ENCODE measurements at regions of chr3 and their contacts with region 1.

Region 1: DNA sequence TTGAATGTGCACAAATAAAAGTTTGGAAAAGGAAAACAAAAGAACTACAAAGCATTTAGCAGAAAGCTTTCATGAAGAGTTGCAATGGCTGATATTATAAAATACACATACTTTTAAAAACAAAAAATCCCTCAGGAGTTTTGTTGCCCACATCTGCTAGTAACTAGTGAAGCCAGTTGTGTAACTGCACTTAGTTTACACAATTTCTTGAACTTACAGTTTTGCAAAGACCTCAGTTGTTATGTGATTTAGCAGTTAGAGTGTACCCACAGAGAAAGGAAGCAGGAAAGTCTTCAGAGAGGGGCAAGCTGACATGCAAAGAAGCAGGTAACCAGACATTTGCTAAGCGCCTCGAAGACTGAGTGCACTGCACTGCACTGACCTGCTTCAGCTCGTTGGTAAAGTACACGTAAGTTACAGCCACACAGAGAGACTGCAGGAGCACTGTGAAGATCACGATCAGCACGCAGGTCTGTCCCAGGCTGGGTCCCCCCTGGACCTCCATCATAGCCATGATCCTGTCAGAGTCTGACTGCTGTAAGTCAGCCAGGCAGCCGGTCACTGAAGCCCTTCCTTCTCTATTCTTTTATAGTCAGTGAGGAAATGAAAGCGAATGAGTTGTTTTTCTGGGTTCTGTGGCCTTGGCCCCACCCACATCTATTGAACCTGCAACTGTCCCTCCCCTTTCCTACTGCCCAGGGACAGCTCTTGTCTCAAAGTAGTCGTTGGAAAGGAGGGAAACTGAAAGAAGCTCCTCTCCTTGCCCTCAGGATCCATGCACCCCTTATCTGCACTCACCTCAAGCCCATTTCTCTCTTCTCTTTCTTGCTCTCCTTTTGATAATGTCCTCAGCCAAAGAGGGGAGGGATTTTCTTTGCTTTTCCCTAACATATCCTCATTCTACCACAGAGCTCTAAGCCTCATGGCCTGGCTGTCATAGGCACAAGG is at the start of gene TNFSF10:
- DNase-seq: peak; percentile 48 to 62
- H3K4me3 ChIP-seq: peak within 1 kb of the TSS; percentile 24; the same call in 1 of the 2 replicates
- H3K27ac ChIP-seq: no peak within 1 kb of the TSS
- H3K4me1 ChIP-seq: peaks cover 7% of the 10 kb centered on the region
- H3K27me3 ChIP-seq: no peaks in the 10 kb centered on the region
- CTCF ChIP-seq: no peak
- total RNA-seq, gene TNFSF10: 18.3 and 21.4 TPM in 2 replicates

Region 2: GRCh38 chr3:172550347-172550943 is 27.3 kb after region 1 on chr3:
- CTCF ChIA-PET with region 1: no interaction called
- POLR2A ChIA-PET with region 1: interaction called, 15 read pairs
- intact Hi-C with region 1: no loop called
- DNase-seq: peak; percentile 79 to 88
- H3K4me3 ChIP-seq: no peak overlapping the region
- H3K27ac ChIP-seq: no peak overlapping the region
- H3K4me1 ChIP-seq: peaks cover 50% of the 10 kb centered on the region
- H3K27me3 ChIP-seq: no peaks in the 10 kb centered on the region
- CTCF ChIP-seq: no peak

Region 3: DNA sequence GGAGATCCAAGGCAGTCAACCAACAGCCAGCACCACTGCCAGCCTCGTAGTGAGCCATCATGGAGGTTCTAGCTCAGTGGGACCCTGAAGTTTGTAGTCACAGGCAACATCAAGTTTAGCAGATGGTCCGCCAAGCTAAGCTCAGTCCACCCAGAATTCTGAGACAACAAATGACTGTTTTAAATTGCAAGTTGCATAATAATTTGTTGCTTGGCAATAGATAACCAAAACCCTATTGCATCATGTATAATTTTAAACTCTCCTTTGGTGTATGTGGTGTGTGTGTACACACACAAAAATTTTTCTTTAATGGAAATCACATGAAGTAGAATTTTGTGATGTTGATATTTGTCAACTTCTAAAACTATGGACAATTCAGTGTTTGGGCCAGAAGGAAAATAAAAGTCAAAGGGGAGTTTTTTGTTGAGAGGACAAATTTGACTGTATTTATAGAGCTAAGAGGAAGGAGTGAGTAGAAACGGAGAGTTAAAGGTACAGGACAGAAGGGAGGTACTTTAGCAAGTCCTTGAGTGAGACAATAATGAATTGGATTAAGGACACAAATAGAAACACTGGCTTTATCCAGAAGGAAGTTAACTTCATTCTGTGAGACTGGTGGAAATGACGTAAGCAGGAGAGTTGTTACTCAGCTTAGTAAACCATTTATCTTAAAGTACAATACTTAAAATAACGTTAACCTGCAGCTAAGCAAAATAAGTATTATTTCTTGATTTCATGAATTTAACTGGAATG is 104.1 kb after region 1 on chr3:
- CTCF ChIA-PET with region 1: no interaction called
- POLR2A ChIA-PET with region 1: no interaction called
- intact Hi-C with region 1: no loop called
- DNase-seq: no peak
- H3K4me3 ChIP-seq: no peak overlapping the region
- H3K27ac ChIP-seq: peak overlapping the region; percentile 32
- H3K4me1 ChIP-seq: peaks cover 30% of the 10 kb centered on the region
- H3K27me3 ChIP-seq: no peaks in the 10 kb centered on the region
- CTCF ChIP-seq: no peak

Region 4: GRCh38 chr3:172982736-172983364 is 459.7 kb after region 1 on chr3:
- CTCF ChIA-PET with region 1: no interaction called
- POLR2A ChIA-PET with region 1: no interaction called
- intact Hi-C with region 1: no loop called
- DNase-seq: no peak
- H3K4me3 ChIP-seq: no peak overlapping the region
- H3K27ac ChIP-seq: no peak overlapping the region
- H3K4me1 ChIP-seq: no peaks in the 10 kb centered on the region
- H3K27me3 ChIP-seq: no peaks in the 10 kb centered on the region
- CTCF ChIP-seq: peak; percentile 47